Transverse colon (tissue), 4 donors: ENCODE measurements at regions of chr1 and their contacts with region 1.

Region 1: GRCh38 chr1:10694633-10695627 is 101.5 kb downstream of the CASZ1 start:
- DNase-seq: peak; percentile 90
- H3K4me3 ChIP-seq: peak overlapping the region; percentile 42 to 67 (median 52)
- H3K27ac ChIP-seq: peak overlapping the region; percentile 89 to 96 (median 94)
- H3K4me1 ChIP-seq: peaks cover 23 to 60% (median 51%) of the 10 kb centered on the region in 4 donors
- H3K27me3 ChIP-seq: no peaks in the 10 kb centered on the region
- CTCF ChIP-seq: no peak
- EP300 ChIP-seq: no peak
- POLR2A ChIP-seq: no peak

Region 2: DNA sequence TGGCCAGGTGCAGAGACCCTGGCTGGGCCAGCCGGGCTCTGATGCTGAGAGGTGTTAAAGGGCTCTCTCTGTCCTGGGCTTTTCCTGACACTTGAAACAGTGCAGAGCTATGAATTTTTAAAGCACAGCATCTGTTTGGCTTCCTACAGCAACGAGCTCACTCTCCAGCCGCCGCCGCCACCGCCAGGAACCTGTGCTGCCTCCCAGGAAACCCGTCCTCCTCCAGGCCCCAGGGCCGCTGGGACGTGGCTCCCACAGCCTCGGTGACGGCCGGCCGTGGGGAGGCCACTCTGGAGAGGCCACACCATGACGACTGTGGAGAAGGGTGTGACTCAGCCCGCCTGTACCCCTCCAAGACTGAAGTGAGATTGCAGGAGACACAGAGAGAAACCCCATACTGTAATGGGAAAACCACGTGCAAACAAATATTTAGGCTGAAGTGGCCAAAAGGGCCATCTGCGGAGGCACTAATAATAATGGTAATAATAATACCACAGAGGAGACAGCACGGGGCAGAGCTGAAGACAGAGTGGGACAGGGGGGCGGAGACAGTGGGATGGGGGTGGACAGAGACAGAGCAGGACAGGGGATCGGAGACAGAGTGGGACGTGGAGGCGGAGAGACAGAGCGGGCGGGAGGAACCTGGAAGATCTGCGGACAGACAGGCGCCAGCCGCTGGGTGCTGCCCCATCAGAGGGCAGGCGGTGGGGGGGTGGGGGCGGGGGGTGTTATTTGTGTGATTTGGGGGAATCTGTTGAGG is 37.7 kb before region 1 on chr1:
- in situ Hi-C with region 1: no loop called
- intact Hi-C with region 1: loop called (anchors 5 kb)
- DNase-seq: no peak
- H3K4me3 ChIP-seq: no peak overlapping the region
- H3K27ac ChIP-seq: peak overlapping the region; percentile 42 to 82 (median 76)
- H3K4me1 ChIP-seq: peaks cover 0 to 20% (median 3%) of the 10 kb centered on the region in 4 donors
- H3K27me3 ChIP-seq: no peaks in the 10 kb centered on the region
- CTCF ChIP-seq: no peak
- EP300 ChIP-seq: no peak
- POLR2A ChIP-seq: no peak

Region 3: DNA sequence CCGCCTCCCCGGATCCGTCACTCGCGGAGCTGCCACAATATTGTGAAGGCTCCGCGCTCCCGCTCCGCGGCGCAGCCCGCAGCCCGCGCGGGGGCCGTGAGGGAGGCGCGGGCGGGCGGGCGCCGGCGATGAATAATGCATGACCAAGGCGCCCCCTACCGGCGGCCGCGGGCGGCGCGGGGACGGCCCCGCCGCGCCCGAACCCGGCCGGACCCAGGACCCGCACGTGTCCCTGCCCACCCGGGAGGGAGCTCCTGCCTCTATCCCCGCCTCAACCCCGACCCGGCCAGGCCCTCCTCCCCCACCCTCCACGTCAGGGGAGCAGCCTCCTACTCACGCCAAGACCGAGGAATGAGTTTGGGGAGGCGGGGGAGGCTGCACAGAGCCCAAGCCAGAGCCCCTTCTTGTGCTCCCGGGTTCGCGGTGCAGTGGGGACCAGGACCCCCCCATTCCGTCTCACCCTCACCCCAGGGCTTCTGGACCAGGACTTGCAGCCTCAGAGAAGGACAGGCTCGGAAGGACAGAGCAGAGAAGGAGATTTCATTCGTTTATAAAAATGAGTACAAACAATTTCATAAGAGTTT is 172.3 kb after region 1 on chr1:
- in situ Hi-C with region 1: loop called in 1 of 4 experiments (anchors 25 kb)
- intact Hi-C with region 1: no loop called
- DNase-seq: peak; percentile 69
- H3K4me3 ChIP-seq: peak overlapping the region; percentile 24 to 49 (median 38)
- H3K27ac ChIP-seq: peak overlapping the region in 2 of 4 donors; percentile 34 to 46
- H3K4me1 ChIP-seq: peaks cover 8 to 17% (median 13%) of the 10 kb centered on the region in 4 donors
- H3K27me3 ChIP-seq: peaks cover 41% of the 10 kb centered on the region
- CTCF ChIP-seq: peak in 4 of 5 experiments; percentile 42 to 83 (median 74)
- EP300 ChIP-seq: no peak
- POLR2A ChIP-seq: no peak